CD8-positive, alpha-beta T cell (primary cell): ENCODE measurements at regions of chr14 and their contacts with region 1.

Region 1: GRCh38 chr14:55270832-55271565 is at the start of gene FBXO34:
- DNase-seq: peak; percentile 98 to 100 (median 100)
- ATAC-seq: peak; percentile 94
- H3K4me3 ChIP-seq: peak within 1 kb of the TSS; percentile 92 to 99
- H3K4me3 Mint-ChIP-seq: peak within 1 kb of the TSS; percentile 89
- H3K27ac ChIP-seq: peak within 1 kb of the TSS; percentile 71 to 85
- H3K27ac Mint-ChIP-seq: peak within 1 kb of the TSS; percentile 94
- H3K4me1 ChIP-seq: peaks cover 12% of the 10 kb centered on the region
- H3K4me1 Mint-ChIP-seq: peaks cover 39% of the 10 kb centered on the region
- H3K27me3 ChIP-seq: no peaks in the 10 kb centered on the region
- H3K27me3 Mint-ChIP-seq: no peaks in the 10 kb centered on the region
- CTCF ChIP-seq: peak; percentile 99
- total RNA-seq, gene FBXO34: 42.6 to 46.3 TPM

Region 2: GRCh38 chr14:55026793-55027561 is 244.0 kb before region 1 on chr14 and contains the starts of genes SOCS4 and WDHD1:
- CTCF ChIA-PET with region 1: no interaction called
- POLR2A ChIA-PET with region 1: no interaction called
- intact Hi-C with region 1: loop called (anchors 1 to 2 kb)
- DNase-seq: peak; percentile 87 to 97 (median 94)
- ATAC-seq: peak; percentile 86
- H3K4me3 ChIP-seq: peak within 1 kb of the TSS; percentile 71 to 91
- H3K4me3 Mint-ChIP-seq: peak within 1 kb of the TSS; percentile 95
- H3K27ac ChIP-seq: peak within 1 kb of the TSS; percentile 80 to 95
- H3K27ac Mint-ChIP-seq: peak within 1 kb of the TSS; percentile 95
- H3K4me1 ChIP-seq: peaks cover 37% of the 10 kb centered on the region
- H3K4me1 Mint-ChIP-seq: peaks cover 54% of the 10 kb centered on the region
- H3K27me3 ChIP-seq: no peaks in the 10 kb centered on the region
- H3K27me3 Mint-ChIP-seq: no peaks in the 10 kb centered on the region
- CTCF ChIP-seq: no peak
- total RNA-seq, gene SOCS4: 22.6 to 24.0 TPM
- total RNA-seq, gene WDHD1: 1.2 to 1.6 TPM

Region 3: DNA sequence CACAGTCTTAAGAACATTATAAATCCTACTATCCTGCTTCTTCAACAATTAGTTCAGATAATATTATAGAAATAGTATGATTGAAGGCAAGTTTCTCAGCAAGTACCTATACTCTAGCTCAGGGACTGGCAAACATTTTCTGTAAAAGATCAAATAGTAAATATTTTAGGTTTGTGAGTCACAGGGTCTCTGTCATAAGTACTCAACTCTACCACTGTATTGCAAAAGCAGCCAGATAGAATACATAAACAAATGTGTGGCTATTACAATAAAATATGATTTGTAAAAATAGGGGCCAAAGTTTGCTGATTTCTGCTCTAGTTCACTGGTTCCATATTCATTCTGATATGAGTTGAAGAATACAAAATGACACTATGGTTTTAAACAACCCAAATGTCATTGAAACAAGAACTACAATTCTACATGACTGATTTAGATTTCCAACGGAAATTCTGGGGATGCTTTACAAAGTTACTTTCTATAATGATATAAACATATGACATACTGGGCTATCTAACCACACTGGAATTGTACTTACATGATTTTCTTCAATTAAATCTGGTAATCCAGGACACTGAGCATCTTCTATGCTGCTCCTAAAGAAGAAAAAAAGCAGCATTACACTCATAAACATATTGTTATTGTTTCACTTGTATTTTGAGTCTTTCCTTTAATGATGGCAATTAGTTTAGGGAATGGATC is 118.8 kb before region 1 on chr14:
- CTCF ChIA-PET with region 1: no interaction called
- POLR2A ChIA-PET with region 1: no interaction called
- intact Hi-C with region 1: no loop called
- DNase-seq: no peak
- ATAC-seq: no peak
- H3K4me3 ChIP-seq: no peak overlapping the region
- H3K4me3 Mint-ChIP-seq: no peak overlapping the region
- H3K27ac ChIP-seq: no peak overlapping the region
- H3K27ac Mint-ChIP-seq: no peak overlapping the region
- H3K4me1 ChIP-seq: no peaks in the 10 kb centered on the region
- H3K4me1 Mint-ChIP-seq: no peaks in the 10 kb centered on the region
- H3K27me3 ChIP-seq: no peaks in the 10 kb centered on the region
- H3K27me3 Mint-ChIP-seq: no peaks in the 10 kb centered on the region
- CTCF ChIP-seq: no peak

Region 4: GRCh38 chr14:55212634-55213033 is 58.4 kb before region 1 on chr14:
- CTCF ChIA-PET with region 1: interaction called, 4 read pairs
- POLR2A ChIA-PET with region 1: interaction called, 3 read pairs
- intact Hi-C with region 1: loop called in 1 of 2 experiments (anchors 1 kb)
- DNase-seq: peak in 1 of 9 experiments; percentile 11
- ATAC-seq: no peak
- H3K4me3 ChIP-seq: no peak overlapping the region
- H3K4me3 Mint-ChIP-seq: no peak overlapping the region
- H3K27ac ChIP-seq: no peak overlapping the region
- H3K27ac Mint-ChIP-seq: no peak overlapping the region
- H3K4me1 ChIP-seq: no peaks in the 10 kb centered on the region
- H3K4me1 Mint-ChIP-seq: peaks cover 3% of the 10 kb centered on the region
- H3K27me3 ChIP-seq: no peaks in the 10 kb centered on the region
- H3K27me3 Mint-ChIP-seq: no peaks in the 10 kb centered on the region
- CTCF ChIP-seq: no peak

Region 5: GRCh38 chr14:55228261-55228660 is 42.7 kb before region 1 on chr14:
- CTCF ChIA-PET with region 1: no interaction called
- POLR2A ChIA-PET with region 1: no interaction called
- intact Hi-C with region 1: no loop called
- DNase-seq: no peak
- ATAC-seq: no peak
- H3K4me3 ChIP-seq: no peak overlapping the region
- H3K4me3 Mint-ChIP-seq: no peak overlapping the region
- H3K27ac ChIP-seq: no peak overlapping the region
- H3K27ac Mint-ChIP-seq: no peak overlapping the region
- H3K4me1 ChIP-seq: no peaks in the 10 kb centered on the region
- H3K4me1 Mint-ChIP-seq: no peaks in the 10 kb centered on the region
- H3K27me3 ChIP-seq: no peaks in the 10 kb centered on the region
- H3K27me3 Mint-ChIP-seq: peaks cover 8% of the 10 kb centered on the region
- CTCF ChIP-seq: no peak

Region 6: GRCh38 chr14:55339770-55340169 is 68.8 kb after region 1 on chr14:
- CTCF ChIA-PET with region 1: interaction called, 4 read pairs
- POLR2A ChIA-PET with region 1: interaction called, 3 read pairs
- intact Hi-C with region 1: loop called (anchors 1 to 5 kb)
- DNase-seq: peak in 2 of 9 experiments; percentile 19 to 26
- ATAC-seq: no peak
- H3K4me3 ChIP-seq: no peak overlapping the region
- H3K4me3 Mint-ChIP-seq: no peak overlapping the region
- H3K27ac ChIP-seq: no peak overlapping the region
- H3K27ac Mint-ChIP-seq: peak overlapping the region; percentile 24
- H3K4me1 ChIP-seq: peaks cover 35% of the 10 kb centered on the region
- H3K4me1 Mint-ChIP-seq: peaks cover 64% of the 10 kb centered on the region
- H3K27me3 ChIP-seq: no peaks in the 10 kb centered on the region
- H3K27me3 Mint-ChIP-seq: no peaks in the 10 kb centered on the region
- CTCF ChIP-seq: no peak

Region 7: GRCh38 chr14:55411426-55412389 is 140.7 kb after region 1 on chr14 and contains the start of gene ATG14:
- CTCF ChIA-PET with region 1: interaction called, 3 read pairs
- POLR2A ChIA-PET with region 1: no interaction called
- intact Hi-C with region 1: loop called in 1 of 2 experiments (anchors 1 kb)
- DNase-seq: peak; percentile 50 to 84 (median 68)
- ATAC-seq: peak; percentile 95
- H3K4me3 ChIP-seq: peak within 1 kb of the TSS; percentile 89 to 90
- H3K4me3 Mint-ChIP-seq: peak within 1 kb of the TSS; percentile 90
- H3K27ac ChIP-seq: peak within 1 kb of the TSS; percentile 54 to 67
- H3K27ac Mint-ChIP-seq: peak within 1 kb of the TSS; percentile 88
- H3K4me1 ChIP-seq: peaks cover 23% of the 10 kb centered on the region
- H3K4me1 Mint-ChIP-seq: peaks cover 44% of the 10 kb centered on the region
- H3K27me3 ChIP-seq: no peaks in the 10 kb centered on the region
- H3K27me3 Mint-ChIP-seq: no peaks in the 10 kb centered on the region
- CTCF ChIP-seq: no peak
- total RNA-seq, gene ATG14: 30.9 to 32.7 TPM

Region 8: DNA sequence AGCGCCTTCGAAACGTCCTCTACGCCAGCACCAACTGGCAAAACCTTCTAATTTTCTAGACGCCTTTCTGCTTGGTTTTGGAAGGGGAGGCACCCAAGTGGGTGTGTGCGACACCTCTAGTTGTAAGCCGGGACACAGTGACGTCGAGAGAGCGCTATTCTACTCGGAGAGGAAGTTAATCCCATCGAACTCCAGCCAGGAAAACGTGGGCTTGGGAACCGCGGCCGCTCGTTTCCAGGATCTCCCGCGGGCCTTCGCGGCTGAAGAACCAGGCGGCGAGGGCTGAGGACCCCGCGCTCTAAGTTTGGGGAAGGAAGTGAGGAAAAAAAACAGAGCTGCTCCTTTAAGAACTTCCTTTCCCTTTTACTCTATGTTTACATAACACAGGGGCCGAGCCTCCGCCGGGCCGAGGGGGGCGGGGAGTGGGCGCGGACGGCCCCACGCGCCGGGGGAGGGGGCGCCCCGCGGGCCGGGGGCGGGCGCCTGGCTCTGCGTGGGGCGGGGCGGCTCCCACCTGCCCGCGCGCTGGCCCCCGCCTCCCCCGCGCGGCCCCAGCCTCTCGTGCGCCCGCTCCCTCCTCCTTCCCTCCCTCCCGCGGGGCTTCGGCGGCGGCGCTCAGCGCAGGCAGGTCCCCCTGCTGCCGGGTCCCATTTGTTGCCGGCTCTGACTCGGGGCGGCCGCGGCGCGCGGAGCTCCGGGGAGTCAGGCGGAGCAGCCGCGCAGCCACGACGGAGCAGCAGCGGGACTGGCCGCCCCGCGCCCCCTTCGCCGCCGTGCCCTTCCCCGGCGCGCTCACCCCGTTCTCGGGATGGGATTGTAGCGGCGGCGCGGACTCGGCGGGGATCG is 847.0 kb after region 1 on chr14 and contains the start of gene PELI2:
- CTCF ChIA-PET with region 1: no interaction called
- POLR2A ChIA-PET with region 1: no interaction called
- intact Hi-C with region 1: loop called (anchors 5 to 10 kb)
- DNase-seq: peak; percentile 66 to 94 (median 82)
- ATAC-seq: peak; percentile 86
- H3K4me3 ChIP-seq: peak within 1 kb of the TSS; percentile 73 to 74
- H3K4me3 Mint-ChIP-seq: peak within 1 kb of the TSS; percentile 95
- H3K27ac ChIP-seq: peak within 1 kb of the TSS; percentile 67 to 92
- H3K27ac Mint-ChIP-seq: peak within 1 kb of the TSS; percentile 99
- H3K4me1 ChIP-seq: peaks cover 34% of the 10 kb centered on the region
- H3K4me1 Mint-ChIP-seq: peaks cover 49% of the 10 kb centered on the region
- H3K27me3 ChIP-seq: no peaks in the 10 kb centered on the region
- H3K27me3 Mint-ChIP-seq: peaks cover 4% of the 10 kb centered on the region
- CTCF ChIP-seq: no peak
- total RNA-seq, gene PELI2: 13.3 to 15.1 TPM